CD4-positive, alpha-beta memory T cell (primary cell): ENCODE measurements at regions of chr18 and their contacts with region 1.

Region 1: DNA sequence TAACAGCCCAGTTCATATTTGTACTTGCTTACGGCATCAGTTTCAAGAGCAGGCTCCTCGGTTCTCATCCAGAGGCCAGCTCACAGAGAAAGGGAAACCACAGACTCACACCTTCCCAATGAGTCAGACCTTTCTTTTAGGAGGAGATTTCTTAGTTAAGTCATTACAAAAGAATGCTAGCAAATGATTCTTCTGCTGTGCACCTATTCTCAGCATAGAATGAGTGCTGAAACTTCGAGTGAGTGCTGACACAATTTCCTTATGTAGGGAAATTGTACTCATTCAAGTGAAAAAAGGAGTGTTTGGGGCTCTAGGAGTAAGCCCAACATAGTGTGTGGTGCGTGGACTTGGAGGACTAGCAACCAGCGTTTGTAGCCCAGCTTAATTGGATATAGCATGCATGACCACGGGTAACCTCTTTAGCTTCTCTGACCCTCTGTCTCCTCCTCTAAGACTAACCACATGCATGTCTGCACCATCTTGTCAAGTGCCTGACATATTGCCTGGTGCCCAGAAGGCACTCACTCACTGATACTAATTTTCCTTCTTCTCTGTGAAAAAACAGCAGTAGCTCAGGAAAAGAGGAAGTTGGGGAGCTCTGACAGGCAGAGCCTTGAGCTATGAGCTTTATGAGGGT is 87.0 kb downstream of the ALPK2 start:
- DNase-seq: peak; percentile 17 to 77 (median 37)
- H3K4me3 ChIP-seq: no peak overlapping the region
- H3K4me3 Mint-ChIP-seq: peak overlapping the region in 5 of 8 donors; percentile 38 to 65 (median 52)
- H3K27ac ChIP-seq: no peak overlapping the region
- H3K27ac Mint-ChIP-seq: peak overlapping the region in 6 of 7 donors; percentile 1 to 90 (median 70)
- H3K4me1 ChIP-seq: peaks cover 21% of the 10 kb centered on the region
- H3K4me1 Mint-ChIP-seq: peaks cover 21 to 31% (median 23%) of the 10 kb centered on the region in 4 donors
- H3K27me3 ChIP-seq: no peaks in the 10 kb centered on the region
- H3K27me3 Mint-ChIP-seq: no peaks in the 10 kb centered on the region

Region 2: DNA sequence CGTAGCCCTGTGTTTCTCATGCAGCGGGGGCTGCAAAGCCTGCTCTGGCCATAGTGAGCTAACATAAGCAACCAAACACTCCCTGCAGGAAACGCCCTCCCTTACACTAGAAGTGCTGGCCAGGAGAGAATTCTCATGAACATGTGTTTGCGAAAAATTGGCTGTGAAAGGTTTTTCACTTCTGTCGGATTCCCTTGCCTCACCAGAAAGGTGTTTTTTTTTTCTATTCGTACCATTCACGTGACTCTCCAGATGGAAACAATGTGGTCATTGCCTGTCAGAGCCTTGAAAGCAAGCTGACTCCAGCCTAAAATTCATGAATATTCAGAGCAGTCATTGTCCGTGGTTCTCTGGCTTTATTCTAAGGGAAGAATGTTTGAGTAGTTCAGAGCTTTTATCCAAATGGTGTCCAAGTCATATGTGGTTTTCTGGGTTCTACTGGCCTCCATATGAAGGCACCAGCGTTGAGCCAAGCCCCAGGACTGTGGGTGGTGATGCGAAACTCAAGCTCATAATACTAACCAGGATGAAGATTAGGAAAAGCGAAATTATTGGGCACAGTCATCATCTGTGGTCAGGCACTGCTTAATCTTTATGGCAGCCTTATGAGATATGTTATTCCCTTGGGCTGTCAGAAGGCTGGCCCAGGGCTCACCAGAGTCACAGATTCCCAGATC is 149.4 kb before region 1 on chr18:
- CTCF ChIA-PET with region 1: no interaction called
- POLR2A ChIA-PET with region 1: no interaction called
- intact Hi-C with region 1: no loop called
- DNase-seq: no peak
- H3K4me3 ChIP-seq: no peak overlapping the region
- H3K4me3 Mint-ChIP-seq: no peak overlapping the region
- H3K27ac ChIP-seq: no peak overlapping the region
- H3K27ac Mint-ChIP-seq: no peak overlapping the region
- H3K4me1 ChIP-seq: no peaks in the 10 kb centered on the region
- H3K4me1 Mint-ChIP-seq: peaks cover 0 to 13% (median 3%) of the 10 kb centered on the region in 4 donors
- H3K27me3 ChIP-seq: no peaks in the 10 kb centered on the region
- H3K27me3 Mint-ChIP-seq: no peaks in the 10 kb centered on the region

Region 3: GRCh38 chr18:58584200-58585127 is 42.6 kb after region 1 on chr18:
- CTCF ChIA-PET with region 1: no interaction called
- POLR2A ChIA-PET with region 1: no interaction called
- intact Hi-C with region 1: loop called (anchors 5 kb)
- DNase-seq: no peak
- H3K4me3 ChIP-seq: no peak overlapping the region
- H3K4me3 Mint-ChIP-seq: no peak overlapping the region
- H3K27ac ChIP-seq: no peak overlapping the region
- H3K27ac Mint-ChIP-seq: no peak overlapping the region
- H3K4me1 ChIP-seq: no peaks in the 10 kb centered on the region
- H3K4me1 Mint-ChIP-seq: peaks cover 0 to 3% (median under 1%) of the 10 kb centered on the region in 4 donors
- H3K27me3 ChIP-seq: no peaks in the 10 kb centered on the region
- H3K27me3 Mint-ChIP-seq: no peaks in the 10 kb centered on the region

Region 4: GRCh38 chr18:58661423-58661822 is 119.5 kb after region 1 on chr18:
- CTCF ChIA-PET with region 1: no interaction called
- POLR2A ChIA-PET with region 1: interaction called, 4 read pairs
- intact Hi-C with region 1: loop called (anchors 5 kb)
- DNase-seq: no peak
- H3K4me3 ChIP-seq: no peak overlapping the region
- H3K4me3 Mint-ChIP-seq: no peak overlapping the region
- H3K27ac ChIP-seq: no peak overlapping the region
- H3K27ac Mint-ChIP-seq: peak overlapping the region in 1 of 7 donors; percentile 6
- H3K4me1 ChIP-seq: peaks cover 46% of the 10 kb centered on the region
- H3K4me1 Mint-ChIP-seq: peaks cover 31 to 56% (median 43%) of the 10 kb centered on the region in 4 donors
- H3K27me3 ChIP-seq: no peaks in the 10 kb centered on the region
- H3K27me3 Mint-ChIP-seq: no peaks in the 10 kb centered on the region

Region 5: GRCh38 chr18:58716060-58716756 is 174.3 kb after region 1 on chr18:
- CTCF ChIA-PET with region 1: interaction called, 3 read pairs
- POLR2A ChIA-PET with region 1: no interaction called
- intact Hi-C with region 1: loop called (anchors 5 kb)
- DNase-seq: peak in 4 of 5 donors; percentile 33 to 42 (median 37)
- H3K4me3 ChIP-seq: no peak overlapping the region
- H3K4me3 Mint-ChIP-seq: peak overlapping the region; percentile 32 to 88 (median 80)
- H3K27ac ChIP-seq: no peak overlapping the region
- H3K27ac Mint-ChIP-seq: peak overlapping the region; percentile 77 to 90 (median 85)
- H3K4me1 ChIP-seq: peaks cover 44% of the 10 kb centered on the region
- H3K4me1 Mint-ChIP-seq: peaks cover 50 to 68% (median 57%) of the 10 kb centered on the region in 4 donors
- H3K27me3 ChIP-seq: no peaks in the 10 kb centered on the region
- H3K27me3 Mint-ChIP-seq: no peaks in the 10 kb centered on the region